ENCODE measurements at regions of chr17 and their contacts with region 1.

Region 1: GRCh38 chr17:39365242-39365641 is 36.2 kb downstream of the FBXL20 start:
- DNase-seq: no peak
- H3K27ac ChIP-seq: no peak overlapping the region
- CTCF ChIP-seq: no peak

Region 2: DNA sequence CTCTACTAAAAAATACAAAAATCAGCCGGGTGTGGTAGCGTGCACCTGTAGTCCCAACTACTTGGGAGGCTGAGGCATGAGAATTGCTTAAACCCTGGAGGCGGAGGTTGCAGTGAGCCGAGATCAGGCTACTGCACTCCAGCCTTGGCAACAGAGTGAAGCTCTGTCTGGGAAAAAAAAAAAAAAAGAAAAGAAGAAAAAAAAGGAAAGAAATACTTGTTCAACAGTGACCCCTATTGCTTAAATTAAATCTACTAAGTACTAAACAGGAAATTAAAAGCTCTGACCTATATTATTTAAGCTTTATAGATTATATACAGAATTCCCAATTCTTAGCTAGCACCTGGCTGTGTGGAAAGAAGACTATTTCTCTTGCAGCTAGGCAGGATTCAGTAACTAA is 12.7 kb before region 1 on chr17:
- CTCF ChIA-PET with region 1: interaction called, 12 read pairs
- POLR2A ChIA-PET with region 1: no interaction called
- DNase-seq: no peak
- H3K27ac ChIP-seq: no peak overlapping the region
- CTCF ChIP-seq: no peak